AG04450 (cell line): ENCODE measurements at regions of chr3 and their contacts with region 1.

Region 1: GRCh38 chr3:138915503-138916498 is 31.1 kb downstream of the FOXL2 start:
- DNase-seq: peak; percentile 75
- H3K4me3 ChIP-seq: peak overlapping the region; percentile 90
- H3K27ac ChIP-seq: peak overlapping the region; percentile 95
- H3K27me3 ChIP-seq: no peaks in the 10 kb centered on the region
- CTCF ChIP-seq: peak; percentile 76

Region 2: DNA sequence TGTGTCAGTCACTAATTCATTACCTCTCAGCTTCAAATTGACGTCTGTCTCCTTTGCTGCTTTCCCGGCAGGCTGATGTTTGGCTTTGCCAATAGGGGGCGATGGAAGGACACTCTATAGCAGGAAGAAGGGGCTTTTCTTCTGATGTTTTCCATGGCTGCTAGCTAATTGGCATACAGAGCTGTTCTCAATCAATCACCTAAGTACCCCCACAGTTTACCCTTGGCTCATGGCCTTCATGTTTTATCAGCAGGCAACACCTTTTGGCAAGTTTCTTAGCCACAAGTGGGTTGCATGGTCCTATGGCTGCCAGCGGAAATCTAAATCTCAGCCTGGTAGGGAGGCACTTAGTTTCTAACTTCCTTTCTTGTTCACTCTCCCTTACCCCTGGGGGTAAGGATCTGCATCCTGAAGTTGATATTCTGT is 436.4 kb before region 1 on chr3:
- CTCF ChIA-PET with region 1: interaction called, 154 read pairs
- POLR2A ChIA-PET with region 1: no interaction called
- DNase-seq: no peak
- H3K4me3 ChIP-seq: no peak overlapping the region
- H3K27ac ChIP-seq: no peak overlapping the region
- H3K27me3 ChIP-seq: no peaks in the 10 kb centered on the region
- CTCF ChIP-seq: peak; percentile 95

Region 3: DNA sequence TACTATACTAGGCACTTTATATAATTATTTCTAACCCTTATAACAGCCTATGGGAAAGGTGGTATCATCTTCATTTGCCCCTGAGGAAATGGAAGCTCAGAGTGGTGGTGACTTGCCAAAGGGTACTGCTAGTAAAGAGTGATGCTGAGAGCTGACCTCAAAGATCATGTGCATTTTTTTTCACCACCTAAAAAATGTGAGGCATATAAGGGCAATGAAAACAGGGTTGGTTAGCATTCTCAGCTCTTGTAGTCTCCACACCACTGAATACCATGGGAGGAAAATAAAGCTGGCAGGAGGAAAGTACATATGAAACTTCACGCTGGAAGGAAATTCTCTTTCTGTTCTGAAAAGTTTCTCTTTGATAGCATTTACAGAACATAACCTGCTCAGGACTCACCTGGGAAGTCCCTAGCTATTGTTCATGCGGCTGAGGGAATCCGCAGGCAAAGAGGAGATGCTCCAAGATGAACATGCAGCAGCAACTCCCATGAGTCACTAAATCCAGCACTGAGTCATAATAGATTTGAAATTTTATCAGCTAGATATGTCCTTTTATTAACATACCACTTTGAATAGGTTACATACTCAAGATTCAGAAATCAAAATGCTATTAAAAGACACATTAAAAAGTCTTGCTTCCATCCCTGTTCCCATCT is 290.0 kb before region 1 on chr3:
- CTCF ChIA-PET with region 1: interaction called, 38 read pairs
- POLR2A ChIA-PET with region 1: interaction called, 4 read pairs
- DNase-seq: peak; percentile 8
- H3K4me3 ChIP-seq: no peak overlapping the region
- H3K27ac ChIP-seq: no peak overlapping the region
- H3K27me3 ChIP-seq: no peaks in the 10 kb centered on the region
- CTCF ChIP-seq: no peak

Region 4: GRCh38 chr3:138717348-138717747 is 198.5 kb before region 1 on chr3:
- CTCF ChIA-PET with region 1: interaction called, 30 read pairs
- POLR2A ChIA-PET with region 1: no interaction called
- DNase-seq: no peak
- H3K4me3 ChIP-seq: no peak overlapping the region
- H3K27ac ChIP-seq: no peak overlapping the region
- H3K27me3 ChIP-seq: no peaks in the 10 kb centered on the region
- CTCF ChIP-seq: no peak

Region 5: DNA sequence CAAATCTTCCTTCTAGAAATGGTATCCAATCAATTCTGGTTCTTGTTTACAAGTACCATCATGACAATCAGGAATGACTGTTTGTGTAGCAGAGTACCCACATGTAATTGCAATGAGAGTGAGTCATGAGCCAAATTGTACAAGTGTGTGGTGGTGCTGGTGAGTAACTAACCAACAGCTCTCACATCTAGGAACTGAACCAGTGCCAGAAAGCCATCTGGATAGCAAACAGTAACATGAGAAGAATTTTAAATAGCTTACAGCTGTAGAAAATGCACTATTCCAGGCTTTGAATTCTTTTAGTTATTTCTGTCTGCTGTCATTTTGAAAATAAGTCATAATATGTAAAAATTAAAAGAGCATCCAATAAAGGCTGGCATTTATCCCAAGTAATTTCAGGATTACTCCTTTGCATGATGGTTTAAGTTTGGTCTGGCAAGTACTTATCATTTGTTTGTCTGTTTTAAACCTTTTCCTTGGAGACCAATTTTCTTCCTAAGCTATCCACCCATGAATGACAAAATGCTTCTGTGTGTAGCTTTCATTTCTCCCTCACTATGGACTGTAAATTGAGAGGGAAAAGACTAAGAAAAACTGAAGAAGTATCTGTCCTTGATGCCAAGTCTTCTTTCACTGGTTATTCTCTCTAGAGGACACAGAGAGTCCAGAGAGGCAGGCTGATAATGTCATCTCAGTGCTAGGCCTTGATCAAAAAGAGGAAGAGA is 141.1 kb before region 1 on chr3:
- CTCF ChIA-PET with region 1: interaction called, 28 read pairs
- POLR2A ChIA-PET with region 1: interaction called, 6 read pairs
- DNase-seq: peak; percentile 98
- H3K4me3 ChIP-seq: no peak overlapping the region
- H3K27ac ChIP-seq: peak overlapping the region; percentile 80
- H3K27me3 ChIP-seq: no peaks in the 10 kb centered on the region
- CTCF ChIP-seq: no peak

Region 6: GRCh38 chr3:138842483-138843188 is 73.2 kb before region 1 on chr3:
- CTCF ChIA-PET with region 1: interaction called, 13 read pairs
- POLR2A ChIA-PET with region 1: no interaction called
- DNase-seq: no peak
- H3K4me3 ChIP-seq: no peak overlapping the region
- H3K27ac ChIP-seq: no peak overlapping the region
- H3K27me3 ChIP-seq: no peaks in the 10 kb centered on the region
- CTCF ChIP-seq: no peak

Region 7: GRCh38 chr3:138946181-138947059 is 30.6 kb after region 1 on chr3:
- CTCF ChIA-PET with region 1: interaction called, 10 read pairs
- POLR2A ChIA-PET with region 1: no interaction called
- DNase-seq: no peak
- H3K4me3 ChIP-seq: peak overlapping the region; percentile 47
- H3K27ac ChIP-seq: no peak overlapping the region
- H3K27me3 ChIP-seq: peaks cover 94% of the 10 kb centered on the region
- CTCF ChIP-seq: 0 out of 2 replicates have a peak, but pooled peaks have one; percentile 15

Region 8: DNA sequence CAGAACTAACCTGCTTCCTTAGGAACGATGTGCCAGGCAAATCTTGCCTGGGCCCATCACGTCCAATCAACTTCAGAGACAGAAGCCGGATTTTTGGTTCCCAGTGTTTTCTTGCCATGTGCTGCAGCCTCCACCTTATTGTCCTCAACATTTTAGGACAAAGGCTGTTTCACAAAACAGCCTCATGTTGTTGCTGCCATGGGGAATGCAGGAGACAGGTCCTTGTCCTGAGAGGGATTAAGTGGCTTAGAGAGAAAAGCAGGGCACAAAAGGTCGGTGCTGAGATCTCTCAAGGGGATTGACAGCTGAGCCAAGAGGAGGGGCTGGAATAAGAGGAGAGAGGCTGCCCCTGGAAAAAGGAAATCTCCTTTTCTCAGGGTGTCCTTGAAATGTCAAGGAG is 773.3 kb after region 1 on chr3:
- CTCF ChIA-PET with region 1: no interaction called
- POLR2A ChIA-PET with region 1: no interaction called
- DNase-seq: no peak
- H3K4me3 ChIP-seq: no peak overlapping the region
- H3K27ac ChIP-seq: no peak overlapping the region
- H3K27me3 ChIP-seq: no peaks in the 10 kb centered on the region
- CTCF ChIP-seq: no peak